Calu3 (cell line): ENCODE measurements at regions of chr10 and their contacts with region 1.

Region 1: GRCh38 chr10:34705563-34705962 is 109.5 kb downstream of the PARD3 start:
- DNase-seq: no peak
- H3K4me3 Mint-ChIP-seq: no peak overlapping the region
- H3K27ac Mint-ChIP-seq: no peak overlapping the region
- H3K4me1 Mint-ChIP-seq: peaks cover 75% of the 10 kb centered on the region
- H3K27me3 Mint-ChIP-seq: no peaks in the 10 kb centered on the region
- CTCF ChIP-seq: no peak

Region 2: GRCh38 chr10:34479520-34480179 is 225.9 kb before region 1 on chr10:
- CTCF ChIA-PET with region 1: no interaction called
- intact Hi-C with region 1: no loop called
- DNase-seq: no peak
- H3K4me3 Mint-ChIP-seq: no peak overlapping the region
- H3K27ac Mint-ChIP-seq: no peak overlapping the region
- H3K4me1 Mint-ChIP-seq: peaks cover 11% of the 10 kb centered on the region
- H3K27me3 Mint-ChIP-seq: no peaks in the 10 kb centered on the region
- CTCF ChIP-seq: no peak

Region 3: GRCh38 chr10:34689053-34689452 is 16.5 kb before region 1 on chr10:
- CTCF ChIA-PET with region 1: no interaction called
- intact Hi-C with region 1: loop called (anchors 1 kb)
- DNase-seq: no peak
- H3K4me3 Mint-ChIP-seq: no peak overlapping the region
- H3K27ac Mint-ChIP-seq: no peak overlapping the region
- H3K4me1 Mint-ChIP-seq: peaks cover 23% of the 10 kb centered on the region
- H3K27me3 Mint-ChIP-seq: no peaks in the 10 kb centered on the region
- CTCF ChIP-seq: no peak